ENCODE measurements at regions of chrX and their contacts with region 1.

Region 1: DNA sequence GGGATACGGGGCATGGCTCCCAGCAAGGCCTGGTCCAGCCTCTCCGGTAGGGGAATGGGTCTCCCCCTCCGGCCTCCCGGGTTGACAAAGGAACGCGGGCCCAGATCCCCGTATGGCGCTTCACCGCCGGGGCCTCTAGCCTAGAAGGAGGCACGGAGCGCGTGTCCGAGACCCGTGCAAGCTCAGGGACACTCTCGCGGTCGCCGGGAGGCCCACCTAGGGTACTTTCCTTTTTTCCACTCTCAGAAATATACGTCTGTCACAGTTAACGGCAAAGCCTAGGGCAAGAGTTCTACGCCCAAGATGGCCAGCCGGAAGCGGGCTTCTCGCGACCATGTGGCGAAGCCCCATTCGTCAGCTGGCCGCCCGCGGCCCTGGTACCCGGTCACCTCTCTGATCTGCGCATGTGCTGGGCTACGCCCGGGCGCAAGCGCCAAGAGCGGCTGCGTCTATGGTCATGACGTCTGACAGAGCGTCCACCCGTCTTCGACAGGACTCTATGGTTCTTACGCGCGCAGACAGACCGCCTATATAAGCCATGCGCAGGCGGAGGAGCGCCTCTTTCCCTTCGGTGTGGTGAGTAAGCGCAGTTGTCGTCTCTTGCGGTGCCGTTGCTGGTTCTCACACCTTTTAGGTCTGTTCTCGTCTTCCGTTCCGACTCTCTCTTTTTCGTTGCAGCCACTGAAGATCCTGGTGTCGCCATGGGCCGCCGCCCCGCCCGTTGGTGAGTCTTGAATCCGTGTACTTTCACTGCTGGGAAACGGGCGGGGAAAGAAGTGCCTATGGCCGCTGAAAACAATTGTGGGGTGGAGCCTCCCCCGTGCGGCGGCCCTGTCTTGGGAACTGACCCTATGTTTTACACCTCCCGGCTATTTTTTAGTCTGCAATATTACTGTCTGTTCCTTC is at the start of gene RPL10:
- DNase-seq: peak; percentile 91
- H3K4me3 Mint-ChIP-seq: peak within 1 kb of the TSS; percentile 94
- H3K27ac Mint-ChIP-seq: peak within 1 kb of the TSS; percentile 100
- H3K4me1 Mint-ChIP-seq: peaks cover 11% of the 10 kb centered on the region
- H3K27me3 Mint-ChIP-seq: no peaks in the 10 kb centered on the region
- total RNA-seq, gene RPL10: 3,331 to 3,466 TPM

Region 2: DNA sequence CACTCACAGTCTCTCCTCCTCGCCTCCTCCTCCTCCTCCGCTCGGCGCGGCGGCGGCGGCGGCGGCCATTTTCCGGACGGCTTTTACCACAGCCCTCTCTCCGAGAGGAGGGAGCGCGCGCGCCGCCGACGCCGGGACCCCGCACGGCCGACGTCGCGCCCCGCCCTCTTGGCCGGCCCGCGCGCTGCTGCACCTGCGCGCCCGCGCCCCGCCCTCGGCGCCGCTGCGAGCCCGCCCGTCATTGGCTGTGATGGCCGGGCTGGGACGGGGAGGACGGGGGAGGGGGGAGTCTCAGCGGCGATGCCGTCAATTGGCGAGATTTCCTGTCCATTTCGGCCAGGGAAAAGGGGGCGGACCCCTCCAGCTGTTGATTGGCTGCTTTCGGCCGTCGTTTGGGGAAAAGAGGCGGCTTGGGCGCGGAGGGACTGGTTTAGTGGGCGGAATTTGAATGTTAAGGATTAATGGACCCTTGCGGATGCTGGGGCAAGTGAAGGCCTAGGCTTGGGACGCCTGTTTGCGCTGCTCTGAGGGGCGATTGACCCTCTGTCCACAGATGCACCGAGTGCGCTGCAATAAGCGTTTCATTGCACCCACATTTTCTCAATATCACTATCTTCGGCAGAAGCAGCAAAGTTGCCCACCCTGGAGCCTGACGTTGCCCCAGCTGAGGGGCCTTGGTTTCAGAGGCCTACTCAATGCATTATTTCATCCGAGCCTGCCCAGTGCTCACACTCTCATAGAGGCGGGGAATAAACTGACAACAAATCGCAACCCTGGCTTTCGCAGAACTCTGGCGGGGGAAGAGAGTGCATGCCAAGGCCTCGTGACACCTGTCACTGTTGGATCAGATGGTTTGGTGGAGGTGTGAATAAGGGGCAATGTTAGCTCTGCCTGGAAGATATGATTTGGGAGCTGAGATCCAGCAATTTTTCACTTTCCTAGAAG is 300.2 kb before region 1 on chrX and contains the start of gene MECP2:
- CTCF ChIA-PET with region 1: no interaction called
- intact Hi-C with region 1: loop called (anchors 5 kb)
- DNase-seq: peak; percentile 94
- H3K4me3 Mint-ChIP-seq: peak within 1 kb of the TSS; percentile 89
- H3K27ac Mint-ChIP-seq: peak within 1 kb of the TSS; percentile 94
- H3K4me1 Mint-ChIP-seq: peaks cover 44% of the 10 kb centered on the region
- H3K27me3 Mint-ChIP-seq: no peaks in the 10 kb centered on the region
- total RNA-seq, gene MECP2: 47.1 to 50.2 TPM

Region 3: GRCh38 chrX:154348114-154348531 is 49.9 kb before region 1 on chrX:
- CTCF ChIA-PET with region 1: no interaction called
- intact Hi-C with region 1: no loop called
- DNase-seq: no peak
- H3K4me3 Mint-ChIP-seq: no peak overlapping the region
- H3K27ac Mint-ChIP-seq: peak overlapping the region; percentile 18
- H3K4me1 Mint-ChIP-seq: peaks cover 17% of the 10 kb centered on the region
- H3K27me3 Mint-ChIP-seq: no peaks in the 10 kb centered on the region

Region 4: DNA sequence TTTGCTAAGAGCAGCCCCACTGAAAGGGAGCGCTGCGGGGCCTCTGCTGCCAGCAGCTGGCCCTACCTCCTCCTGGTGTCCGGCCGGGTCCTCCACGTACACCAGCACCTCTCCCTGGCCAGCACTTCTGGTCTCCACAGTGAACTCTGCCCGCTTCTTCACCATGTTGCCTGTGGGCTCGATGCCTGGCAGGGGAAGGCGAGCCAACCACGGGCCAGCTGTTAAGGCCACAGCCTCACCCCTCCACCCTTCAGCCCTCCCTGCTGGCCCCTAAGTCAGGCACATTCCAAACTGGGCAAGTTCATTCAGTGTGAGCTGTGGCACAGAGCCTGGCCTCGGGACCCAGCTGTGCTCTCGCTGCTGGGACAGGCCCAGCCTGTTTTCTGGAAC is 31.4 kb before region 1 on chrX:
- CTCF ChIA-PET with region 1: no interaction called
- intact Hi-C with region 1: no loop called
- DNase-seq: no peak
- H3K4me3 Mint-ChIP-seq: no peak overlapping the region
- H3K27ac Mint-ChIP-seq: no peak overlapping the region
- H3K4me1 Mint-ChIP-seq: peaks cover 9% of the 10 kb centered on the region
- H3K27me3 Mint-ChIP-seq: no peaks in the 10 kb centered on the region

Region 5: GRCh38 chrX:154428176-154429010 is 30.3 kb after region 1 on chrX and contains the start of gene ATP6AP1:
- CTCF ChIA-PET with region 1: interaction called, 4 read pairs
- intact Hi-C with region 1: loop called (anchors 1 kb)
- DNase-seq: peak; percentile 94
- H3K4me3 Mint-ChIP-seq: peak within 1 kb of the TSS; percentile 74
- H3K27ac Mint-ChIP-seq: peak within 1 kb of the TSS; percentile 63
- H3K4me1 Mint-ChIP-seq: peaks cover 24% of the 10 kb centered on the region
- H3K27me3 Mint-ChIP-seq: no peaks in the 10 kb centered on the region
- total RNA-seq, gene ATP6AP1: 20.3 to 21.1 TPM

Region 6: GRCh38 chrX:154478728-154479622 is 80.9 kb after region 1 on chrX and contains the start of gene LAGE3:
- CTCF ChIA-PET with region 1: no interaction called
- intact Hi-C with region 1: loop called (anchors 5 kb)
- DNase-seq: peak; percentile 95
- H3K4me3 Mint-ChIP-seq: peak within 1 kb of the TSS; percentile 83
- H3K27ac Mint-ChIP-seq: peak within 1 kb of the TSS; percentile 94
- H3K4me1 Mint-ChIP-seq: peaks cover 30% of the 10 kb centered on the region
- H3K27me3 Mint-ChIP-seq: no peaks in the 10 kb centered on the region
- total RNA-seq, gene LAGE3: 42.3 to 42.8 TPM

Region 7: DNA sequence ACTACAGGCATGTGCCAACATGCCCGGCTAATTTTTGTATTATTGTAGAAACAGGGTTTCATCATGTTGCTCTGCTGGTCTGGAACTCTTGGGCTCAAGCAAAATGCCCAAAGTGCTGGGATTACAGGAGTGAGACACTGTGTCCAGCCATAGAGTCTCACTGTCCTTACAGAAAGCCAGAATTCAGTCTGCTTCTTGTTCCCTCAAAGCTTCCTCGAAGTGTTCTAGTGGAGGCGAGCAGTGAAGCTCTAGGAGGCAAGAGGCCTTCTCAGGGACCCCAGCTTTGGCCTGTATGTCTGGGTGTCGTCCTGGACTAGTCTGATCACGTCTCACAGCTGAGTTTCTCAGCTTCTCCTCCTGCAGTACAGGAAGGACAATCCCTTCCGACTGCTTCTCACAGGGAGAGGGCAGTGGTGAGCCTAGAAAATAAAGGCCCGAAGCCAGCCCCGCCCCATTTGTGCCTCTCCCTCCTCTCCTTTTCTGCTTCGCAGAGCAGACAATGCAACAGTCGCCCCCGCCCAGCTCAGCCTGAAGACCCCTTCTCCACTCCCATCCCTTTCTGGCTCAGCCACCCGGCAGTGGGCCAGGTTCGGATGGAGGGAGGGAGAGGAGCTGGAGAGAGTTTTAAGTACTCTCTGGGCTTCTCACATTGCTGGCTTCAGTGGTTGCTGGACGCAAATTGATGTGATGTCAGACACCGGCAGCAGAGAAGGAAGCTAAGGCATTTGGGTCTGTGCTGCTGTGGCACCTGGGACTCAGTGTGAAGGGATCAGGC is 129.0 kb after region 1 on chrX:
- CTCF ChIA-PET with region 1: no interaction called
- intact Hi-C with region 1: loop called (anchors 5 kb)
- DNase-seq: peak; percentile 84
- H3K4me3 Mint-ChIP-seq: no peak overlapping the region
- H3K27ac Mint-ChIP-seq: peak overlapping the region; percentile 79
- H3K4me1 Mint-ChIP-seq: peaks cover 15% of the 10 kb centered on the region
- H3K27me3 Mint-ChIP-seq: no peaks in the 10 kb centered on the region

Region 8: DNA sequence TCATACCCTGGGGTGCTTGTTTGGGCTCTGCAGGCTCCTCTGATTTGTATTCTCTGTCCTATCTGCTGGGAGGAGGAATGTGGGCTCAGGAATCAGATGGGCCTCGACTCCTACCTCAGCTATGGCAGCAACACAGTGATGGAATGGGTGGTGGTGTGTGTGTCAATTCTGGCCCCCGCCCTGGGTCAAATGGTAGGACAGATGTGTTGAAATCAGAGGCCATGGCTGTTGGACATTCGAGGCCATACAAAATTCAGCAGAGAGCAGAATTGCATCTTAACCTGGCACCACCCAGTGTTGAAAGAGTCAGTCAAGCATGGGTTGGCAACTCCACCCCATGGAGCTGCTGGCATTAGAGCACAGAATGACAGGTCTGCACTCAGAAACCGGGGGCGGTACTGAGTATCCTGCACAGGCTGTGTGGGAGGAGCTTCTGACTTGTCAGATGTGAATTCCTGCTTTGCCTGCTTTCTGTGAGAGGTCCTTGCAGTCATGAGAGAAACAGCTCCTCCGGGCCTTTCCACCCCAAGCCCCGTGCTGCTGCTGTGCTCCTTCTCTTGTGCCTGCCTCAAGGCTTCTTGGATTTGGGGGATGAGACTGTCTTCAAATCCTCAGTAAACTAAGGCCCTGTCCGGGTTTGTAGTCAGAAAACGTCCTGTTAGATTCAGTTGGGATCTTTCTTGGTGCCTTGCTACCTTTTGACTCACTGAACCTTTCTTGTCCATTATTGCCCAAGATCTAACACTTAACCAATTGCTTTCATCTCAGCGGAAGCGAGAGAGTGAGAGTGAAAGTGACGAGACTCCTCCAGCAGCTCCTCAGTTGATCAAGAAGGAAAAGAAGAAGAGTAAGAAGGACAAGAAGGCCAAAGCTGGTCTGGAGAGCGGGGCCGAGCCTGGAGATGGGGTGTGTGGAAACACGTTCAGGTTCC is 377.6 kb after region 1 on chrX:
- CTCF ChIA-PET with region 1: no interaction called
- intact Hi-C with region 1: no loop called
- DNase-seq: peak; percentile 40
- H3K4me3 Mint-ChIP-seq: no peak overlapping the region
- H3K27ac Mint-ChIP-seq: peak overlapping the region; percentile 28
- H3K4me1 Mint-ChIP-seq: peaks cover 28% of the 10 kb centered on the region
- H3K27me3 Mint-ChIP-seq: no peaks in the 10 kb centered on the region